AG04449 (cell line): ENCODE measurements at regions of chr10 and their contacts with region 1.

Region 1: GRCh38 chr10:44857363-44858016 is 53.6 kb upstream of the TMEM72 start:
- DNase-seq: no peak
- H3K4me3 ChIP-seq: no peak overlapping the region
- CTCF ChIP-seq: peak; percentile 98

Region 2: DNA sequence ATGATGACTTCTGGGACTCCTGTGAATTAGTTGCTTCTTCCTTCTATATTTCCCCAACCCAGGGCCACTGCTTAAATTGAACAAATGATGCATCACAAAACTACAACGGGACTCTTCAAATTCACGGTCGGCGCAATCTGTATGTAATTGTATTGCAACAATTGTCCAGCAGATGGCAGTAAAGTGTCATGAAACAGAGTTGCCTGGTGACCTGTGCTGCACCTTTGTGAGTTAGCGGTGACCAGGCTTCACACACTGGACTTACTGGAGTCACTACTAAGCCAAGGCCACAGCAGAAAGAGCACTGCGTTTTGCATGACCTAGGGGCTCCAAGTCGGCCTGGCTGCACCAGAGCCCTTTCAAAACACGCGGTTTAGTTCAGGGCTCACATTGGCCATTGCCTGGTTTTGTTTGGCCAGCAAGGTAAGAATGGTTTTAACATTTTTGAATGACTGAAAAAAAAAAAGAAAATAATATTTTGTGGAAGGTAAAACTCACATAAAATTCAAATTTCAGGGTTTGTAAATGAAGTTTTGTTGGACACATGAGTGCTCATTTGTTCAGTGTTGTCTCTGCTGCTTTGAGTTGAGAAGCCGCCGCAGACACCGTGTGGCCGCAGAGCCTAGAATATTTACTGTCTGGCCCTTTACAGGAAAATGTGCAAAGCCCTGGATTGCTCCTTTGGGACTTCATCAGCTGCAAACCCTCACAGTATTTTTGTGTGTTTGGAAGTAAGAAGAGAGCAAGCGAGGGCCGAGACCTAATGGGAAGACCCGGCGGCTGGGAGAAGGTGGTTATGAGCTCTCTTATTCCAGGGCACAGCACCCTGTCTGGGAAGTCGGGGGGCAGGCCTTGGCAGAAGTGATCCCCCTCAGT is 1185.6 kb before region 1 on chr10:
- CTCF ChIA-PET with region 1: interaction called, 25 read pairs
- POLR2A ChIA-PET with region 1: no interaction called
- DNase-seq: no peak
- H3K4me3 ChIP-seq: no peak overlapping the region
- CTCF ChIP-seq: peak; percentile 56

Region 3: DNA sequence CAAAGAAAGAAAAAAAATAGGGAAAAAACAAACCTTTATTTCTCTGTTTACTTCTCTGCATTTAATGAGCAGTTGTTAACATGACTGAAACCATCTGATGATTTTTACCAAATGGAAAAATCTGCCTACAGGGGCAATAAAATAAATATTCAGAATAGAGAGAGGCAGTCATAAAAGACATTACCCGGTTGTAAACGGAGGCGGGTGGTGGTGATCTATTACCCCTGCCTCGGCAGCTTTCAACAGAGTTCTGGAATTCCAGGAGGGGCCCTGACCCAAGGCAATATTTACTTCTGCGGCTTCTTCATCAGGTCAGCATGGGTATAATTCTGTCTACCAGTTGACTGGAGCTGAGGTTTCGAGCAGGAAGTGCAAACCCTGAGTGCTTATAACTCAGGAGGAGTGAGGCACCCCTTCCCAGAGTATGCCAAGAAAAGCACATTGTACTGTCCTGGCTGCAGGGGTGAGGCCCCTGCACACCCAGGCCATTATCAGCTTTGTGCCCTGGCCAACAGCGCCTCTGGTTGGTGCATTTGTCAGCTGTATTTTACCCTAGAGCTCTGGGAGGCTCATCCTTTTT is 464.3 kb before region 1 on chr10:
- CTCF ChIA-PET with region 1: interaction called, 80 read pairs
- POLR2A ChIA-PET with region 1: no interaction called
- DNase-seq: no peak
- H3K4me3 ChIP-seq: no peak overlapping the region
- CTCF ChIP-seq: no peak

Region 4: GRCh38 chr10:44462338-44462914 is 395.1 kb before region 1 on chr10:
- CTCF ChIA-PET with region 1: interaction called, 12 read pairs
- POLR2A ChIA-PET with region 1: no interaction called
- DNase-seq: no peak
- H3K4me3 ChIP-seq: no peak overlapping the region
- CTCF ChIP-seq: no peak

Region 5: DNA sequence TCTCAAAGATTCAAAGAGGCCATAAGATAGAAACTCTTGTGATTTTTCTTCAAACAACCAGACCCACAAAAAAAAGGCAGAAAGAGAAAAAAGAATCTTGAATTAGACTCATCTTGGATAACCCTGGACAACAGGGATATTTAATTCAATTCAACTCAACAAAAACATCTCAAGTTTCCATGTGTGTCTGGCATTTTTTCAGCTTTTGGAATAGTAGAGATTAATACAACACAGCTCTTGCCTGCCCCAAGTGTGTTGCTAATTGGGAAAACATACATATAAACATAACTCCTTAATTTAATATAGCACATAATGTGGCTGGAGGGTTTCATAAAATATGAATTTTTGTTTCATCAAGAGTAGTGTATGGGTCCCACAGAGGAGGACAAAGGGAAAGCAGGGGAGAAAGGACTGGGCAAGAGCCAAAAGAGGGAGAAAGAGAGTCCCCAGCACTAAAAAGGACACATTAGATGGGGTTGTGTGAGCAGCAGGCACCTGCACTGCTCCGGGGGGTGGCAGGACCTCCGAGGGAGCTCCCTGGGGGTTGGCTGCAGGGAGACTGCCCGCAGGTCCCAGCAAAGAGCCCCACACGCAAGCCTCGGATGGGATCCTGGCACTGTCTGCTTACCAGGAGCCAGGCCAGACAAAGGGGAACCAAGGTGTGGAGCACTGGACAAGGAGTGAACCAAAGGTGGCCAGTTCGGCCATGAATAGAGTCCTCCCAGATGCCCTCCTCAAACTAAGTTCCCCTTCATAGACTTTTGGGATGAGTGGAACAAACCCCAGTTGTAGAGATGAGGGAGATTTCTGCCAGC is 11.9 kb before region 1 on chr10:
- CTCF ChIA-PET with region 1: interaction called, 44 read pairs
- POLR2A ChIA-PET with region 1: no interaction called
- DNase-seq: no peak
- H3K4me3 ChIP-seq: no peak overlapping the region
- CTCF ChIP-seq: no peak

Region 6: GRCh38 chr10:44932517-44933450 is 75.3 kb after region 1 on chr10:
- CTCF ChIA-PET with region 1: no interaction called
- POLR2A ChIA-PET with region 1: no interaction called
- DNase-seq: peak; percentile 12
- H3K4me3 ChIP-seq: no peak overlapping the region
- CTCF ChIP-seq: peak; percentile 100

Region 7: DNA sequence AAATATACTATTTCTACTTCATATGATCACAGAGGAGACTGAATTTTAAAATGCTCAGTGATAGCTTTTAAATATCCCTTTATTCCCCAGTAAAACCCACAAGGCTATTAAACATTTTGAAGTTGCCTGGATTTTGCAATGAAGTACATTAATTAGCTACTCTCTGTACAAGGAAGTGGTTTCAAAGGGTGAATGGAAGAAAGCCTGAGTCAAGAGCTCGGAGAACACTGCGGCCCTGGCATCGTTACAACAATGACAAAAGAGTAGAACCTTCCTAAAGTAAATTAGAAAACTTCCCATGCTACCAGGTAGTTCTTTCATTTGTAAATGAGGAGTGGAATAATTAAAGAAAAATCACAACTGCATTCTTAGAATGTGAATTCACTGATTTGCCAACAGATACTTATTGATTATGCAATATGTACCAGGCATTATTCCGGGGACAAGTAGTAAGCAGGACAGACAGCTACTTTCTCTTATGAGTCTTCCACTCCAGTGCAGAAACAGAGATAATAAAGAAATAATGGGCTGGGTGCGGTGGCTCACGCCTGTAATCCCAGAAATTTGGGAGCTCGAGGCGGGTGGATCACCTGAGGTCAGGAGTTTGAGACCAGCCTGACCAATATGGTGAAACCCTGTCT is 206.2 kb after region 1 on chr10:
- CTCF ChIA-PET with region 1: no interaction called
- POLR2A ChIA-PET with region 1: no interaction called
- DNase-seq: no peak
- H3K4me3 ChIP-seq: no peak overlapping the region
- CTCF ChIP-seq: no peak